ENCODE measurements at regions of chr17 and their contacts with region 1.

Region 1: GRCh38 chr17:1573916-1574696 is 11.5 kb upstream of the PITPNA start:
- DNase-seq: peak; percentile 83 to 85 (median 85)
- H3K4me3 ChIP-seq: no peak overlapping the region
- H3K4me3 Mint-ChIP-seq: no peak overlapping the region
- H3K27ac ChIP-seq: peak overlapping the region; percentile 1 to 99
- H3K27ac Mint-ChIP-seq: peak overlapping the region; percentile 46 to 100 (median 85)
- H3K4me1 ChIP-seq: peaks cover 62 to 69% of the 10 kb centered on the region in 2 donors
- H3K4me1 Mint-ChIP-seq: peaks cover 56% of the 10 kb centered on the region
- H3K27me3 ChIP-seq: no peaks in the 10 kb centered on the region
- H3K27me3 Mint-ChIP-seq: peaks cover 0 to 9% (median 0%) of the 10 kb centered on the region in 3 donors
- CTCF ChIP-seq: peak; percentile 97

Region 2: DNA sequence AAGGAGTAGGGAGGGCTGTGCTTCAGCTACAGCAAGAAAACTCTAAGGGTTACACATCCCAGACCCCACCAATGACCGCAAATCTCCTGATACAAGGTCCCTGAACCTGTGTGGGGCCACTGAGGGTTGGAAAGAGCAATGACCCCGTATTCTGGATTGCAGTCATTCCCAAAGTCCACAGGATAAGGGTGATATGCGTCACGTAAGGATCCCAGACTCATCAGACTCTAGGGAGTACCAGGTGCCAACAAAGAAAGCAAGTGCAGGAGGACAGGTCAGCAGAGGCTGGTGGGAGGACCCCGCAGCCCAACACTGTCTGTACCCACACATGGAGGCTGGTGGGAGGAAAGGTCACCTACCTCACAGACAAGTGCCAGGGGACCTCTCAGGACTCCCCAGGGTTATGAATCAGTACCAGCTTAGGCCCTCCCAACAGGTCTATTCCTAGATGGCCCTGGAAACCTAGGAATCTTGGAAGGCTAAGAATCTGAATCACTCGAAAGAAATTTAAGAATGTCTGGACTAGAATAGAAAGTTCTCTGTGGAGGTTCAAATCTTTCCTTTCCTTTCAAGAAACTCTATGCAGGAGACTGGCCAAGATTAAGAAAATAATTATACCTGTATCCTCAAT is 27.7 kb before region 1 on chr17:
- intact Hi-C with region 1: no loop called
- DNase-seq: no peak
- H3K4me3 ChIP-seq: no peak overlapping the region
- H3K4me3 Mint-ChIP-seq: no peak overlapping the region
- H3K27ac ChIP-seq: no peak overlapping the region
- H3K27ac Mint-ChIP-seq: peak overlapping the region in 1 of 7 donors; percentile 36
- H3K4me1 ChIP-seq: no peaks in the 10 kb centered on the region
- H3K4me1 Mint-ChIP-seq: no peaks in the 10 kb centered on the region
- H3K27me3 ChIP-seq: no peaks in the 10 kb centered on the region
- H3K27me3 Mint-ChIP-seq: peaks cover 0 to 2% (median 1%) of the 10 kb centered on the region in 3 donors
- CTCF ChIP-seq: no peak

Region 3: GRCh38 chr17:1590031-1590748 is 16.1 kb after region 1 on chr17:
- intact Hi-C with region 1: loop called in 1 of 2 experiments (anchors 1 kb)
- DNase-seq: peak; percentile 85 to 95 (median 92)
- H3K4me3 ChIP-seq: no peak overlapping the region
- H3K4me3 Mint-ChIP-seq: peak overlapping the region; percentile 35 to 60
- H3K27ac ChIP-seq: peak overlapping the region; percentile 88 to 99
- H3K27ac Mint-ChIP-seq: peak overlapping the region; percentile 98 to 99 (median 99)
- H3K4me1 ChIP-seq: peaks cover 76 to 84% of the 10 kb centered on the region in 2 donors
- H3K4me1 Mint-ChIP-seq: peaks cover 75% of the 10 kb centered on the region
- H3K27me3 ChIP-seq: no peaks in the 10 kb centered on the region
- H3K27me3 Mint-ChIP-seq: peaks cover 0 to 6% (median 2%) of the 10 kb centered on the region in 3 donors
- CTCF ChIP-seq: no peak

Region 4: GRCh38 chr17:1606352-1607033 is 32.4 kb after region 1 on chr17:
- intact Hi-C with region 1: loop called (anchors 2 to 5 kb)
- DNase-seq: peak in 1 of 3 donors; percentile 68
- H3K4me3 ChIP-seq: peak overlapping the region in 2 of 3 experiments; percentile 9 to 43
- H3K4me3 Mint-ChIP-seq: peak overlapping the region in 1 of 2 donors; percentile 50
- H3K27ac ChIP-seq: peak overlapping the region; percentile 99 to 100
- H3K27ac Mint-ChIP-seq: peak overlapping the region; percentile 98 to 100 (median 100)
- H3K4me1 ChIP-seq: peaks cover 69 to 70% of the 10 kb centered on the region in 2 donors
- H3K4me1 Mint-ChIP-seq: peaks cover 56% of the 10 kb centered on the region
- H3K27me3 ChIP-seq: no peaks in the 10 kb centered on the region
- H3K27me3 Mint-ChIP-seq: peaks cover 0 to 4% (median 2%) of the 10 kb centered on the region in 3 donors
- CTCF ChIP-seq: no peak